ENCODE measurements at regions of chr1 and their contacts with region 1.

Region 1: DNA sequence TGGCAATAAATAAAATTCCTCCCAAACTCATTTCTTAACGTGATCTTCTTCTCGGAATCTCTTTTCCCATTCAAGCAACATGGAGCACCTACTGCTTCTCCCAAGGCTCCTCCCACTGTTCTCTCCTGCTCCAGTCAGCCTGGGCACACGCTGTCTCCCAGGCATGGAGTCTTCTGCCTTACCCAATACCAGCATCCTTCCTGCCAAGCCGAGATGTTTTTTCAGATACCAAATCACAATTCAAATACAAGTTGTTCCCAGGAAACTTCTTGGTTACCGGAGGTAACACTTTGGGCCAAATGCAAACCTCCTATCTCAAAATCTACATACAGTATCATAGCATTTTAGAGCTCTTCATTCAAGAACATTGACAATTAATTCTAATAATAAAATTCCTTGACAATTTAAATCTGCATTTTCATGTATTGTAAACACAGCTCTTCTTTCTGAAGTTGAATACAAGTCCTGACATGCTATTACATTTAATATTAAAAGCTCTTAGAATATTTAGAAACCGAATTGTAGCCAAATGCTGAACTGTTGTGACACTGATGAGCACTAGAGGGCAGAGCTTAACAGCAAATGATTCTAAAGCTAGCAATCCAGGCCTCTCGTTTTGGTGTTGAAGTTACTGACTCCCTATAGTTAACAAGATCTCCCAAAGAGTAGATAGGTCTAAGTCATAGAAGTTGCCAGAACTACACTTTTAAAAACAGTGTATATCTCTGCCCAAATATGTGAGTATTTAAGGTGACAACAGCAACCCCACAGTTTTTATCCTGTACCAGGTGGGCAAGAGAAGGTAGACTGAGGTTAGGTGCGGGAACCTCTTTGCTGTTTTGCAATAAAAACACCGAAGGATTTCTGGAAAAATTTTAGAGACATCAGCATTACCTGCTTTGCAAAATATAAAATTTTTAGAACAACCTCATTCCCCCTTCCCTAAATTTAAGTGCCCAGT is 52.3 kb downstream of the BCAR3 start:
- DNase-seq: no peak
- ATAC-seq: peak; percentile 62

Region 2: DNA sequence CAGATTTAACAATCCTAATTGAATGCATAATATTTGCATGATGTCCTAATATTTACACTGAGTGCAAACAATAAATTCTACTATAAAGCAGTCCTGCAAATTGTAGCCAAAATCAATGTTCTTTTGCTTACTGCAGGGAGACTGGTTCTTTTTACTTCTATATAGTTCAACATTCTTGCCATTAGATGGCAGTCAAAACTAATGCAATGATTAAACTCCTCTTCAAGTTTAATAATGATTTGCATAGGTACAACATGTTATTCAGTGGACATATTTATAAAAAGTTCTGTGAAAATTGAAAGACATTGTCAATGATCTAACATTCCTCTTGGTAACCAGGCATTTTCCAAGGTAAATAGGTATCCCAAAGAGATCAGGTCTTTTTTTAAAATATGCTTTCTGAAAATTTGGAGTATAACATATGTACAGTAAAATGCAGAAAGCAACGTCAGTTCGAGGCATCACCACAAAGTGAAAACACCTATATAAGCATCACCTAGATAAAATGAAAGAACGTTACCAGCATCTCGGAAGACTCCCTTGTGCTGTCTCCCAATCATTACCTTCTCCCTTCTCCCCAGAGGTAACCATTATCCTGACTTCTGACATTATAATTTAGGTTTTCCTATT is 191.3 kb before region 1 on chr1:
- intact Hi-C with region 1: loop called (anchors 5 kb)
- DNase-seq: no peak
- ATAC-seq: peak; percentile 65

Region 3: GRCh38 chr1:93676424-93676823 is 47.0 kb after region 1 on chr1:
- intact Hi-C with region 1: loop called (anchors 5 kb)
- DNase-seq: peak; percentile 51
- ATAC-seq: peak; percentile 15

Region 4: DNA sequence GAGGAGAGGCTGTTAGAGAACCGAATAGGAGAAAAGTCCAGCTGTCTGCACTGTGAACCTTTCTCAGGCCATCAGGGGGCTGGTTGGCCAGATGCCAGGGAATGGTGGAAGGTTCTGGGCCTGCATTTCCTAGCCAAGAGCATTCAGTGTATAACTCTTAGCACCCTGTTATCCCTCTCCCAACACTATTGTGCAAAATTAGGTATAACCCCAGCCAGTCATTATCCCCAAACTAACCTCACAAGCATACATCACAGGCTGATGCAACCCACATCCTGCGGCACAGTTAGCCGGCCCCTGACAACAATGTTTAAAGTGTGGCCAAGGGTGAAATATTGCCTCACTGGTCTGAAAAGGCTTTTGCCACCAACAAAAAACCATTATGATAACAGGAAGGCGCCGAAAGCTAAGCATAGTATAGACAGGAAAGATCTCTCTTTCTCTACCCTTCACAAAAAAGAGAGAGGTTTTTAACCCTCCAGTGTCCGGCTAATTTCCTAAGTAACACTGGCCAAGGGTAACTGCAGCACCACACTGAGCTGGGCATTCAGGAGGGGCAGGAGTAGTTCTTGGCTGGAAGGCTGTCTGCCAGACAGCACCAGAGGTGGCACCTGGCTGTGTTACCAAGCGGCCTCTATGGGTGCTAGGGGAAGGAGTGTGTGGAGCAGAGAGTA is 129.6 kb after region 1 on chr1:
- intact Hi-C with region 1: no loop called
- DNase-seq: peak; percentile 42
- ATAC-seq: peak; percentile 36

Region 5: GRCh38 chr1:93814059-93814794 is 184.8 kb after region 1 on chr1:
- intact Hi-C with region 1: loop called (anchors 2 kb)
- DNase-seq: no peak
- ATAC-seq: peak; percentile 83

Region 6: DNA sequence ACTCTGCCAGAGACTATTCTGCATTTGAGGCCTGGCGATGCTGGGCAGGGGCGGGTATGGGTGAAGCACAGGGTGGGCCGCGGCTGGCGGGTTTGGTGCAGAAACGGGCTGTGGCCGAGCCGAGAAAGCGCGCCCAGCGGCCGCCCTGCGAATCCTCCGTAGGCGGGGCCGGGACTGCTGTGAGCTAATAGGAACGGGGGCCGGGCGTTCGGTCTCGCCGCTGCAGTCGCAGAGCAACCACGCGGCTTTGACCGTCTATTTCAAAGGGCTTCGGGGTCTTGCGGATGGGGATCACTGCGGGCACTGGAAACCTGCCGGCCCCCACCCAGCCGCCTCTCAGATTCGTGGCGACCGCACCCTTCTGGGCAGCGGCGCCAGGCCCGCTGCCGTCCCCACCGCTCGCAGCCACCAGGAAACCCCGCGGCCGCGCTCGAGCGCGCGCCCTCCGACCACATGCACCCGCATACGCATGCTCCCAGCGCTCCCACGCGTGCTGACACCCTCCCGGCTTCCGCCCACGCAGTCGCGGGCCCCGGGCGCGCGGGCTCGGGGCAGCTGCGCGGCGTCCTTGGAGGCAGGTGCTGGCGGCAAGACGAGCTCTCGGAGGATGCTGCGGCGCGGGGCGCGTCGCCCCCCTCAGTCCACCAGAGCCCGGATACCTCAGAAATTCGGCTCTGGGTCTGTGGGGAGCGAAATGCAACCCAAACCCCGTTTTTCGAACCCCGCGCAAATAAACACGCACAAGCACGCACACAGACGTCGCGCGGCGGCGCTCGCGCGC is 217.0 kb after region 1 on chr1:
- intact Hi-C with region 1: loop called (anchors 10 kb)
- DNase-seq: peak; percentile 94
- ATAC-seq: peak; percentile 77